Gastrocnemius medialis (tissue), 4 donors: ENCODE measurements at regions of chr1 and their contacts with region 1.

Region 1: GRCh38 chr1:24111996-24112779 is at the start of gene MYOM3:
- DNase-seq: peak; percentile 86 to 92
- ATAC-seq: peak; percentile 65 to 68
- H3K4me3 ChIP-seq: peak within 1 kb of the TSS; percentile 58 to 69 (median 64)
- H3K27ac ChIP-seq: peak within 1 kb of the TSS; percentile 93 to 97 (median 96)
- H3K4me1 ChIP-seq: peaks cover 26 to 51% of the 10 kb centered on the region in 2 donors
- H3K27me3 ChIP-seq: no peaks in the 10 kb centered on the region
- CTCF ChIP-seq: peak; percentile 59 to 82 (median 79)
- POLR2A ChIP-seq: peak; percentile 45 to 80
- total RNA-seq, gene MYOM3: 114 to 266 (median 184) TPM

Region 2: DNA sequence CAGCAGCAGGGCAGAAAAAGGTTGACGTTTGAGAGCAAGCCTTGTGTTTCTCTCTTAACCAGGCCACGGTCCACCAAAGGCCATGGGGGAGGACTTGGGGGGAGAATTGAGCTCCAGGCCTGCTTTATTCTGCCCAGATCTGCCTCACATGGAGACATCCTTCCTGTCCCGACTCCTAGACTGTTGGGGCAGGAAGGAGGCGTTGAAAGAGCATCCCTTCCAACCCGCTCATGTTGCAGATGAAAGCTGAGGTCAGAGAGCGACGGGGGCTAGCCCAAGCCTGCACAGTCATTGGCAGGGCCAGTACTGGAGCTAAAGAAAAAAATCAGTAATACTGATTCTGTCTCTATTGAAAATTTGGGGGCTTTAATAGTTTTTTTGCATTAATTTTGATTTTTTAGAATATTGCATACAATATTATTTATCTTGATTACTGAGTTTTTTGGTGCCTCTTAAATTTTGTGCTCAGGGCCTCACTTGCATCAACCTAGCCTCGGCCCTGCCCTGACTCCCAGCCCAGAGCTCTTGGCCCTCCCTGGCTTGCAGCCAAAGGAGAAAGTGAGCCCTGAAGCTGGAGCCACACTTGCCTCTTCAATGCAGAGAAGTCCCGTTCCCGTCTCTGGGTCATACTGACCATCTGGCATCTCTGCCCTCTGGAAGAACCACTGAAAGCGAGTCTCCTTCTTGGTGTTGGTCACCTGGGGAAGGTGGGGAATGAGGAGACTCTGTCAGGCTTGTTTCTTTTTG is 46.7 kb before region 1 on chr1:
- in situ Hi-C with region 1: loop called in 3 of 4 experiments (anchors 5 to 10 kb)
- intact Hi-C with region 1: no loop called
- DNase-seq: no peak
- ATAC-seq: no peak
- H3K4me3 ChIP-seq: no peak overlapping the region
- H3K27ac ChIP-seq: peak overlapping the region; percentile 74 to 89 (median 85)
- H3K4me1 ChIP-seq: peaks cover 16 to 18% of the 10 kb centered on the region in 2 donors
- H3K27me3 ChIP-seq: no peaks in the 10 kb centered on the region
- CTCF ChIP-seq: no peak
- POLR2A ChIP-seq: no peak

Region 3: GRCh38 chr1:24070821-24071393 is 41.3 kb before region 1 on chr1:
- in situ Hi-C with region 1: loop called in 3 of 4 experiments (anchors 5 to 10 kb)
- intact Hi-C with region 1: loop called (anchors 1 kb)
- DNase-seq: peak; percentile 74 to 83
- ATAC-seq: peak; percentile 76 to 82
- H3K4me3 ChIP-seq: no peak overlapping the region
- H3K27ac ChIP-seq: peak overlapping the region; percentile 76 to 89 (median 80)
- H3K4me1 ChIP-seq: peaks cover 28 to 43% of the 10 kb centered on the region in 2 donors
- H3K27me3 ChIP-seq: no peaks in the 10 kb centered on the region
- CTCF ChIP-seq: peak; percentile 82 to 95 (median 94)
- POLR2A ChIP-seq: no peak

Region 4: DNA sequence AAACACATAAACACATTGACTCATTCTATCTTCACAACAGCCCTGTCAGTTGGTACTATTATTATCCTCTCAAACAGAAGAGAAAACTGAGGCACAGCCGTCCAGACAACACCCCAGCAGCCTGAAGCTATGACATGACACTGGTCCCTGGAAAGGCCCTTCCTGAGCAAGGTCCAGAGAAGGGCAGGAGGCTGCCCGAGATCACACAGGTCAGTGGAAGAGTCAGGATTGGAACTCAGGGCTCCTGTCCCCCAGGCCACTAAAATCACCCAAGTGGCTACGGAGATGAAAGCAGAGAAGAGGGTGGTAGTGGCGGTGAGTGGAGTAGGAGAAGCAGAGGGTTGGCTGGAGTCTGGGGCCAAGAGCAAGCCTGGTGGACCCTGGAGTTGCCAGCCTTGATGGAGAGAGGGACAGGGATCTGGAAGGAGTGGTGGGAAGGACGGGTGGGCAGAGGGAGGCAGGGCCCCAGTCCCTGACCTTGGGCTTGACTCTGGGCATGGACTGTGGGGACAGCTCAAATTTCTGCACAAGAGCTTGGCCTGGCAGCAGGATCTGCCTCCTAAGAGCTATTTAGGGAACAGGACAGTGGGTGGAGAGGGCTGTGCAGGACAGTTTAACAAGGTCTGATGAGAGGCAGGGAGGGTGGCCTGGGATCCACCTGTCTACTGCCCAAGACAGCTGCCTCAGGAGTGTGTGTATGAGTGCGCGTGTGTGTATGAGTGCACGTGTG is 16.0 kb before region 1 on chr1:
- in situ Hi-C with region 1: no loop called
- intact Hi-C with region 1: loop called (anchors 1 kb)
- DNase-seq: peak; percentile 94 to 97
- ATAC-seq: peak; percentile 90 to 91
- H3K4me3 ChIP-seq: no peak overlapping the region
- H3K27ac ChIP-seq: peak overlapping the region; percentile 93 to 97 (median 96)
- H3K4me1 ChIP-seq: peaks cover 32 to 34% of the 10 kb centered on the region in 2 donors
- H3K27me3 ChIP-seq: no peaks in the 10 kb centered on the region
- CTCF ChIP-seq: peak in 1 of 5 experiments; percentile 30
- POLR2A ChIP-seq: peak; percentile 11 to 12